HepG2 (cell line): ENCODE measurements at regions of chr14 and their contacts with region 1.

Region 1: GRCh38 chr14:93736378-93737014 is 51.8 kb downstream of the PRIMA1 start:
- DNase-seq: peak; percentile 16
- ATAC-seq: peak; percentile 90
- H3K4me3 ChIP-seq: no peak overlapping the region
- H3K27ac ChIP-seq: no peak overlapping the region
- H3K4me1 ChIP-seq: no peaks in the 10 kb centered on the region
- H3K27me3 ChIP-seq: no peaks in the 10 kb centered on the region
- CTCF ChIP-seq: peak; percentile 73
- EP300 ChIP-seq: no peak
- POLR2A ChIP-seq: no peak
- RAD21 ChIP-seq: peak; percentile 70

Region 2: GRCh38 chr14:93892923-93893558 is 156.5 kb after region 1 on chr14:
- CTCF ChIA-PET with region 1: interaction called, 11 read pairs
- POLR2A ChIA-PET with region 1: no interaction called
- in situ Hi-C with region 1: no loop called
- intact Hi-C with region 1: loop called (anchors 1 kb)
- DNase-seq: peak; percentile 44
- ATAC-seq: peak; percentile 80
- H3K4me3 ChIP-seq: peak overlapping the region in 1 of 3 experiments; percentile 18; a peak in 1 of 6 replicates
- H3K27ac ChIP-seq: no peak overlapping the region
- H3K4me1 ChIP-seq: peaks cover 55% of the 10 kb centered on the region
- H3K27me3 ChIP-seq: peaks cover 5 to 48% of the 10 kb centered on the region in 2 experiments; a peak in 4 of 5 replicates
- CTCF ChIP-seq: peak; percentile 89
- EP300 ChIP-seq: no peak
- POLR2A ChIP-seq: no peak
- RAD21 ChIP-seq: peak; percentile 76

Region 3: DNA sequence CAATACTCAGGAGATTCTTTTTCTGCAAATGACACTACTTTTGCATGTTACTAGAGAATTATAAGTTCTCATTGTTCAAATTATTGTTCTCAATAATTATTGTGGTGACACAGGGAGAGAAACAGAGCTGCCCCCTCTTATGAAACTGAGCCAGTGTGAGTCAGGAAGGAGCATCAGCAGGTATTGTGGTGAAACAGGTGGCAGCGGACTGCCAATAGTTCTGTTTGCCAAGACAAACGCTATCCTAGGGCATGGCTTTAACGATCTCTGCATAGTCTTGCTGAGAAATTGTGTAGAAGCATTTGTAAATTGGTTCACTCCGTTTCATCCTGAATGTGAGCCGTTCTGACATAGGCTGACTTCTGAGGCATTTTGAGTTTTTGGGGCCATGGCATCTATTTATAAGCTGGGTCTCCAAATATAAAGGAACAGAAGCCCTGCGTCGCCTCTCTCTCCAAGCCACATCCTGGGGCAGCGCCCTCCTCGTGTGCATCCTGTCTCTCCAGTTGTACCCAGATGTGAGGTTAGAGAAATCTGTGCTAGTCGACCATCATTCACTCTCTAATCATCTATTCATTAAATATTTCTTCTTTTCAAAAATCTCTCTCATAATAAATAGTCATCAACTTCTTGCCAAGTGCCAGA is 421.9 kb after region 1 on chr14:
- CTCF ChIA-PET with region 1: no interaction called
- POLR2A ChIA-PET with region 1: no interaction called
- in situ Hi-C with region 1: no loop called
- intact Hi-C with region 1: no loop called
- DNase-seq: no peak
- ATAC-seq: no peak
- H3K4me3 ChIP-seq: no peak overlapping the region
- H3K27ac ChIP-seq: no peak overlapping the region
- H3K4me1 ChIP-seq: peaks cover 43% of the 10 kb centered on the region
- H3K27me3 ChIP-seq: peaks cover 0 to 6% of the 10 kb centered on the region in 2 experiments; a peak in 1 of 5 replicates
- CTCF ChIP-seq: no peak
- EP300 ChIP-seq: no peak
- POLR2A ChIP-seq: no peak
- RAD21 ChIP-seq: no peak